Posterior vena cava (tissue), 2 donors: ENCODE measurements at regions of chr2 and their contacts with region 1.

Region 1: DNA sequence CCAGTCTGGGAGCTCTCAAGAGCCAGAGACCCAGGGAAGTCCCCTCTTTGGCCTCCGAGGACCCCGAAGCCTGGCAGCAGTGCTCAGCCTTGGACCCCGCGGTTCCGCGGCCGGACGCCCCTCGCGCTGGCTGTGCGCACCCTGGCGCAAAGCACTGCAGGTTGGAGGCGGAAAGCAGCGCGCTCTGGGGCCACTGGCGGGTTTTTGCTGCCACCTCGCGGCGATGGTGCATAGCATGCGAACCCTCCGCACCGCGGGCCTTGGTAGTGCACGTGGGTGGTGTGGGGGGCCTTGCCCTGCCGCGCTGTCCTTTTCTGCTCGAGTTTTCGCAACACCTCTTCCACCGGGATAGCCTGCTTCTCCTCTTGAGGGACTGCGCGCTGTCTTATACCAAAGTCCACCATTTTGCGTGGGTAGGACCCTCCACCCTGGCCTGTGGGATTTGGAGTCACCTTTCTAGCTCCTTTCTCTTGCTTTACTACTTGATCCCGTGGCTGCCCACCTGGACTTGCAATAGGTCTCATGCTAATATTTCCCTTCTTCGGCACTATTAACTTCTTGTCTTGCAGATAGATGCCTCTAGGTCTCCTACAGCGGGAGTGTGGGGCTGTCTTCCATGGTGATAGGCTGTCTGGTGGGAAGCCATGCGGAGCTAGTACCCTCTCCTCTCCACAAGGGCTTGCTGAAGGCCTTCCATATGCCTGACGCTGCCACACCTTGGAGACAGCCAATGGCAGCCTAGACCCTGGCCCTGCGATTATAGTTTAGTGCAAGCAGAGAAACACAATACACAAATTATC is 14.3 kb downstream of the SIX3 start:
- DNase-seq: peak; percentile 94

Region 2: GRCh38 chr2:44044281-44044720 is 911.5 kb before region 1 on chr2:
- intact Hi-C with region 1: loop called in 1 of 2 experiments (anchors 5 kb)
- DNase-seq: peak; percentile 94

Region 3: DNA sequence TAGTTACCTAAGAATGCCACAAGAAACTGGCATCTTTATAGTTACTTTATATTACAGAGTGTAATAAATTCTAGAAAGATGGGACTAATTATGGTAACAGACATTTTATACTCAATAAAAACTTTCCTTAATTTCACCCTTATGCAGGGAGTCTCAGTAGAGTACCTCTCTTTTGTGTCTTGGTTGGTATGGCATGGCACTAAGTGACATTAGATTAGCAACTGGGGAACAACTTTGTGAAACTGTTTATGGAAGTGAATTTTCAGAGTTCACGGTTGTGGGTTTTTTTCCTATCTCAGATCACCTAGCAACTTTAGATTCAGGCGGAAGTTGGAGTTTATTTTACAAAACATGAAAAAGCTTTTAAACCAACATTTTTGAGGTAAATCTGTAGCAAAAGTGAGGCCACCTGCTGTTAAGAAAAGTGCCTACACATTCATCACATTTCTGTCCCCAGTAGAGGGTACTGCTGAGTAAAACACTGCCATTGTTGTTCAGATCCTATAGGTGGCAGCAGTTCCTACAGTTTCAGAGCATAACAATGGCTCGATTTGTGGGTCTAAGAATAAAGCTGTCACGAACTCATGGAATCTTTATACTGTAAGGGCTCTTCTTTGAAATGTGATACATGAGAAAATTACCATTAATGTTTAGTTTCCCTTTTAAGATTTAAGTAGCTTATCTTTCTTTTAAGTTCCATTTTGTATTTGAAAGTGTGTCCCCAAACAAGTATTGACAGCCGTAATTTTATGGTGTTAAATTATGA is 476.5 kb before region 1 on chr2:
- intact Hi-C with region 1: loop called (anchors 5 to 10 kb)
- DNase-seq: no peak